GM18951 (cell line): ENCODE measurements at regions of chr22 and their contacts with region 1.

Region 1: DNA sequence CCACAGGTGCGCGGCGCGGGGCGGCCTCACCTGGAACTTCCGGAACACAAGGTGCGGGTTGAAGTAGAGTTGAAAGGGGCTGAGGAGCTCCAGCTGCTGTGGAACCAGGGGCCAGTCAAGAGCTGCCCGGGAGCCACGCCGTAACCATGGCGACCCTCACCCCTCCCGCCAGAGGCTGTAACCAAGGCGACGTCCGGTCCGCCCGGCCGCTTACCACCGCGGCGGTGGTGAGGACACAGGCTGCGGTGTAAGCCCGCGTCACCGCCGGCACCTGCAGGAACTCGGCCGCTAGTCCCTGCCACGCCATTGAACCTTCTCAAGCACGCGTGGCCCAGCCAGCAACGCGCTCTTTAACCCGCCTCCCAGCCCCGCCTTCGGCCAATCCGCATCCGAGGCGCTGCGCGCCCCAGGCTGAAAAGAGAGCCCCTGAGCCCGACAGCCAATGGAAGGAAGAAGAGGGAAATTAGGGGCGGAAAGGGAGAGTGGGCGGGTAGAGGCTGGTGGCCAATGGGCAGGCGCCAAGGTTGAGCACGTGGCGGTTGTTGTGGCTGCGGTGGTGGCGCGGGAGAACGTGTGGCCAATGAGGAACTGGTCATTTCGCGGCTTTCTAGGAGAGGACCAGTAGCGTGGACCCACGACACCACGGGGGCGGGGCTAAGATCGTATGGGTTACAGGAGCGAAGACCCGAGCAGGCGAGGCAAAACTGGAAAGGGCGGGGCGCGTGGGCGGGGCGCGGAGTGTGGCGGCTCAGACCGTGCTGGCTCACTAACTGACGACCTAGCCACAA is at the start of gene DERL3:
- POLR2A ChIP-seq: peak; percentile 20

Region 2: DNA sequence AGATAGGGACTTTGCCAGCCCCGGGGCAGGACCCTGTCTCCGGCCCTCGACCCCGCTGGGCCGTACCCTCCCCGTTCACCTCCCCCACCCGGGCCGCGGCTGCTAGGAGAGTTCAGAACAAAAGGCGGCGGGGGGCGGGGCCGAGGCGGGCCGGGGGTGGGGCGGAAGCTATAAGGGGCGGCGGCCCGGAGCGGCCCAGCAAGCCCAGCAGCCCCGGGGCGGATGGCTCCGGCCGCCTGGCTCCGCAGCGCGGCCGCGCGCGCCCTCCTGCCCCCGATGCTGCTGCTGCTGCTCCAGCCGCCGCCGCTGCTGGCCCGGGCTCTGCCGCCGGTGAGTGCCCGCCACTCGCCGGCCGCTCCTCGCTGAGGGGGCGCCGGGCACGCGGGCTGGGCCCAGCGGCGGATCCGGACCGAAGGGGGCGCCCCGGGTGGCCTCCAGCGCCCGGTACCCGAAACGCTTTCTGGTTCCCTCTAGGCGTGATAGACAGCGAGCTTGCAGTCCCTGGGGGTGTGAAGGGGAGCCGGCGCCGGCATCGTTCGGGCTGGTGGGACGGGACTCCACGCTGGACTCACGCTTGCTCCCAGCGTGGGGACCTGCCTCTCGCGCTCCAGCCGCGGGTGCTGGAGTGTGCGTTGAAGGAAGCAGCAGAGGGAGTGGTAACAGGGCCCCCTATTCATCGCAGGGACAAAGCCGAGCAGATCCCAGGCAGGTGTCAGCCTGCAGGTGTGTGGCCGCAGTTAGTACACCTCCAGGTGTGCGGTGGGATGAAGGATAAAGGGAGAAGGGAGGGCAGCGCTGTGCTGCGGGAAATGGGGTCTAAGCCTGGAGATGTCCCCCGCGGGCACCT is 66.0 kb before region 1 on chr22 and contains the start of gene MMP11:
- in situ Hi-C with region 1: loop called (anchors 10 kb)
- POLR2A ChIP-seq: no peak